Pancreas (tissue), 10 donors: ENCODE measurements at regions of chr1 and their contacts with region 1.

Region 1: GRCh38 chr1:7667625-7668218 is 103.4 kb upstream of the VAMP3 start:
- DNase-seq: peak; percentile 76 to 99 (median 93)
- ATAC-seq: peak; percentile 81 to 96 (median 92)
- H3K4me3 ChIP-seq: no peak overlapping the region
- H3K27ac ChIP-seq: peak overlapping the region in 1 of 4 donors; percentile 22
- H3K4me1 ChIP-seq: no peaks in the 10 kb centered on the region
- H3K27me3 ChIP-seq: no peaks in the 10 kb centered on the region
- CTCF ChIP-seq: peak; percentile 99 to 100 (median 100)

Region 2: GRCh38 chr1:7752512-7753417 is 85.0 kb after region 1 on chr1:
- intact Hi-C with region 1: loop called in 2 of 3 experiments (anchors 2 to 5 kb)
- DNase-seq: peak in 4 of 6 donors; percentile 33 to 72 (median 44)
- ATAC-seq: peak; percentile 86 to 95 (median 88)
- H3K4me3 ChIP-seq: no peak overlapping the region
- H3K27ac ChIP-seq: no peak overlapping the region
- H3K4me1 ChIP-seq: no peaks in the 10 kb centered on the region
- H3K27me3 ChIP-seq: no peaks in the 10 kb centered on the region
- CTCF ChIP-seq: peak in 3 of 4 donors; percentile 36 to 70 (median 64)

Region 3: GRCh38 chr1:7869136-7869905 is 201.6 kb after region 1 on chr1:
- intact Hi-C with region 1: no loop called
- DNase-seq: no peak
- ATAC-seq: no peak
- H3K4me3 ChIP-seq: no peak overlapping the region
- H3K27ac ChIP-seq: no peak overlapping the region
- H3K4me1 ChIP-seq: no peaks in the 10 kb centered on the region
- H3K27me3 ChIP-seq: no peaks in the 10 kb centered on the region
- CTCF ChIP-seq: no peak

Region 4: DNA sequence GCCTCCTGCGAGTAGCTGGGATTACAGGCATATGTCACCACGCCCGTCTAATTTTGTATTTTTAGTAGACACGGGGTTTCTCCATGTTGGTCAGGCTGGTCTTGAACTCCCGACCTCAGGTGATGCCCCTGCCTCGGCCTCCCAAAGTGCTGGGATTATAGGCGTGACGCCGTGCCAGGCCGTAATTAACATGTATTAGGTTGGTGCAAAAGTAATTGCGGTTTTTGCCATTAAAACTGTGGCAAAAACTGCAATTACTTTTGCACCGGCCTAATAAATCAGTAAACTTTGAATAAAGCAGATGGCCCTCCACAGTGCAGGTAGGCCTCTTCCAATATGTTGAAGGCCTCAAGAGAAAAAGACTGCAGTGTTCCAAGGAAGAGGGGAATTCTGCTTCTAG is 237.5 kb after region 1 on chr1:
- intact Hi-C with region 1: loop called in 1 of 3 experiments (anchors 5 kb)
- DNase-seq: no peak
- ATAC-seq: no peak
- H3K4me3 ChIP-seq: no peak overlapping the region
- H3K27ac ChIP-seq: no peak overlapping the region
- H3K4me1 ChIP-seq: no peaks in the 10 kb centered on the region
- H3K27me3 ChIP-seq: no peaks in the 10 kb centered on the region
- CTCF ChIP-seq: no peak

Region 5: DNA sequence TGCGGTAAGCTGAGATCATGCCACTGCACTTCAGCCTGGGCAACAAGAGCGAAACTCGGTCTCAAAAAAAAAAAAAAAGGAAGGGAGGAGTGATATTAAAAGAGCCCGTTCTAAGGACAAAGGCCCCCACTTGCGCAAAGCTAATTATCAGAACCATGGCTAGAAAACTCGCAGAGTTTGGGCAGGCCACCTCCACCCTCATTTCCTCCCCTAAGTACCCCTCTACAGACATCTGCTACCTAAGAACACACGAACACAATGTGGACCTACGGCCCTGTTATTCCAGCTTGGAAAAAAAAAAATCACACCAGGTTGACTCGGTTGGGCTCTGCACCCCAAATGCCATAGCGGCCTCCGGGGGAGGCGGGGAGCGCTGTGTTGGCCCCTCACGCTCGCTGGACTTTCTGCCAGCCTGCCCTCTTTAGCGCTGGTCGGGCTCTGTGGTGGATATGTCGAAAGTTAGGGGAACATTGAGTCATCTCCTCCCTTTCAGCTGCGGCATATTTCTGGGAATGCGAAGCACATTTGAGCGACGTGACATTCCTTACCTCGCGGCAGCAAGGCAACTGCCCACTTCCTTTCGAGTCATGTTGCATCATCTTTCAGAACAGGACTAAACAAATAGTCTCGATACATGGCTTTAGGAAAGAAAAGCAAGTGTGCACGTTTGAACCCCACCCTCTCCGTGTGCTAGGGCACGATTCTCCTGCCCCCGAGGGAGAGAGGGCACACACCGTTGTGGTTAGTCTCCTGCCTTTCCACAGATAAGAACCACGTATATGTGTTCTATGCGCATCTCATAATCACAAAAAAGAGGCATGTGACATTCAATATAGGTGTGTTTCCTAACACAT is 544.1 kb after region 1 on chr1:
- intact Hi-C with region 1: no loop called
- DNase-seq: no peak
- ATAC-seq: peak in 3 of 4 donors; percentile 23 to 74 (median 58)
- H3K4me3 ChIP-seq: no peak overlapping the region
- H3K27ac ChIP-seq: no peak overlapping the region
- H3K4me1 ChIP-seq: peaks cover 0 to 2% (median under 1%) of the 10 kb centered on the region in 3 donors
- H3K27me3 ChIP-seq: no peaks in the 10 kb centered on the region
- CTCF ChIP-seq: no peak

Region 6: GRCh38 chr1:8348777-8349491 is 681.2 kb after region 1 on chr1:
- intact Hi-C with region 1: loop called in 1 of 3 experiments (anchors 10 kb)
- DNase-seq: peak; percentile 46 to 86 (median 75)
- ATAC-seq: peak; percentile 74 to 84 (median 82)
- H3K4me3 ChIP-seq: no peak overlapping the region
- H3K27ac ChIP-seq: no peak overlapping the region
- H3K4me1 ChIP-seq: no peaks in the 10 kb centered on the region
- H3K27me3 ChIP-seq: no peaks in the 10 kb centered on the region
- CTCF ChIP-seq: peak; percentile 55 to 85 (median 75)